ENCODE measurements at regions of chr6 and their contacts with region 1.

Region 1: GRCh38 chr6:2988426-2989331 is 11.0 kb upstream of the NQO2 start:
- DNase-seq: peak in 8 of 9 donors; percentile 68 to 84 (median 78)
- ATAC-seq: peak; percentile 87
- H3K4me3 ChIP-seq: peak overlapping the region; percentile 76
- H3K4me3 Mint-ChIP-seq: peak overlapping the region; percentile 88 to 98 (median 96)
- H3K27ac ChIP-seq: peak overlapping the region; percentile 94
- H3K27ac Mint-ChIP-seq: peak overlapping the region; percentile 94 to 100 (median 100)
- H3K4me1 ChIP-seq: peaks cover 14% of the 10 kb centered on the region in 2 donors
- H3K4me1 Mint-ChIP-seq: peaks cover 15 to 41% (median 30%) of the 10 kb centered on the region in 7 donors
- H3K27me3 ChIP-seq: no peaks in the 10 kb centered on the region
- H3K27me3 Mint-ChIP-seq: peaks cover 0 to 11% (median 0%) of the 10 kb centered on the region in 5 donors

Region 2: GRCh38 chr6:2684059-2684749 is 304.5 kb before region 1 on chr6:
- CTCF ChIA-PET with region 1: no interaction called
- POLR2A ChIA-PET with region 1: no interaction called
- intact Hi-C with region 1: no loop called
- DNase-seq: no peak
- ATAC-seq: no peak
- H3K4me3 ChIP-seq: no peak overlapping the region
- H3K4me3 Mint-ChIP-seq: no peak overlapping the region
- H3K27ac ChIP-seq: no peak overlapping the region
- H3K27ac Mint-ChIP-seq: no peak overlapping the region
- H3K4me1 ChIP-seq: no peaks in the 10 kb centered on the region
- H3K4me1 Mint-ChIP-seq: no peaks in the 10 kb centered on the region
- H3K27me3 ChIP-seq: no peaks in the 10 kb centered on the region
- H3K27me3 Mint-ChIP-seq: no peaks in the 10 kb centered on the region

Region 3: GRCh38 chr6:2744209-2744771 is 244.4 kb before region 1 on chr6:
- CTCF ChIA-PET with region 1: no interaction called
- POLR2A ChIA-PET with region 1: no interaction called
- intact Hi-C with region 1: no loop called
- DNase-seq: no peak
- ATAC-seq: no peak
- H3K4me3 ChIP-seq: no peak overlapping the region
- H3K4me3 Mint-ChIP-seq: no peak overlapping the region
- H3K27ac ChIP-seq: no peak overlapping the region
- H3K27ac Mint-ChIP-seq: no peak overlapping the region
- H3K4me1 ChIP-seq: no peaks in the 10 kb centered on the region
- H3K4me1 Mint-ChIP-seq: no peaks in the 10 kb centered on the region
- H3K27me3 ChIP-seq: no peaks in the 10 kb centered on the region
- H3K27me3 Mint-ChIP-seq: peaks cover 0 to 40% (median 0%) of the 10 kb centered on the region in 5 donors

Region 4: GRCh38 chr6:2791124-2791974 is 197.3 kb before region 1 on chr6:
- CTCF ChIA-PET with region 1: interaction called, 16 read pairs
- POLR2A ChIA-PET with region 1: interaction called, 8 read pairs
- intact Hi-C with region 1: loop called (anchors 1 kb)
- DNase-seq: peak in 8 of 9 donors; percentile 10 to 61 (median 53)
- ATAC-seq: peak; percentile 73
- H3K4me3 ChIP-seq: no peak overlapping the region
- H3K4me3 Mint-ChIP-seq: peak overlapping the region in 8 of 10 donors; percentile 12 to 71 (median 56)
- H3K27ac ChIP-seq: no peak overlapping the region
- H3K27ac Mint-ChIP-seq: peak overlapping the region; percentile 29 to 90 (median 81)
- H3K4me1 ChIP-seq: peaks cover 15 to 19% of the 10 kb centered on the region in 2 donors
- H3K4me1 Mint-ChIP-seq: peaks cover 29 to 44% (median 36%) of the 10 kb centered on the region in 7 donors
- H3K27me3 ChIP-seq: no peaks in the 10 kb centered on the region
- H3K27me3 Mint-ChIP-seq: no peaks in the 10 kb centered on the region

Region 5: GRCh38 chr6:2876210-2877056 is 112.2 kb before region 1 on chr6:
- CTCF ChIA-PET with region 1: interaction called, 3 read pairs
- POLR2A ChIA-PET with region 1: interaction called, 10 read pairs
- intact Hi-C with region 1: no loop called
- DNase-seq: no peak
- ATAC-seq: peak; percentile 38
- H3K4me3 ChIP-seq: peak overlapping the region; percentile 50
- H3K4me3 Mint-ChIP-seq: peak overlapping the region; percentile 79 to 87 (median 84)
- H3K27ac ChIP-seq: peak overlapping the region; percentile 71
- H3K27ac Mint-ChIP-seq: peak overlapping the region; percentile 82 to 98 (median 91)
- H3K4me1 ChIP-seq: peaks cover 54 to 55% of the 10 kb centered on the region in 2 donors
- H3K4me1 Mint-ChIP-seq: peaks cover 63 to 83% (median 79%) of the 10 kb centered on the region in 7 donors
- H3K27me3 ChIP-seq: no peaks in the 10 kb centered on the region
- H3K27me3 Mint-ChIP-seq: no peaks in the 10 kb centered on the region

Region 6: GRCh38 chr6:2952557-2953095 is 36.1 kb before region 1 on chr6:
- CTCF ChIA-PET with region 1: interaction called, 5 read pairs
- POLR2A ChIA-PET with region 1: interaction called, 7 read pairs
- intact Hi-C with region 1: loop called (anchors 1 to 2 kb)
- DNase-seq: peak in 4 of 9 donors; percentile 10 to 61 (median 54)
- ATAC-seq: peak; percentile 96
- H3K4me3 ChIP-seq: no peak overlapping the region
- H3K4me3 Mint-ChIP-seq: peak overlapping the region in 3 of 10 donors; percentile 53 to 65 (median 64)
- H3K27ac ChIP-seq: no peak overlapping the region
- H3K27ac Mint-ChIP-seq: peak overlapping the region in 4 of 9 donors; percentile 34 to 87 (median 68)
- H3K4me1 ChIP-seq: peaks cover 0 to 2% of the 10 kb centered on the region in 2 donors
- H3K4me1 Mint-ChIP-seq: peaks cover 10 to 31% (median 16%) of the 10 kb centered on the region in 7 donors
- H3K27me3 ChIP-seq: no peaks in the 10 kb centered on the region
- H3K27me3 Mint-ChIP-seq: peaks cover 0 to 12% (median 0%) of the 10 kb centered on the region in 5 donors

Region 7: DNA sequence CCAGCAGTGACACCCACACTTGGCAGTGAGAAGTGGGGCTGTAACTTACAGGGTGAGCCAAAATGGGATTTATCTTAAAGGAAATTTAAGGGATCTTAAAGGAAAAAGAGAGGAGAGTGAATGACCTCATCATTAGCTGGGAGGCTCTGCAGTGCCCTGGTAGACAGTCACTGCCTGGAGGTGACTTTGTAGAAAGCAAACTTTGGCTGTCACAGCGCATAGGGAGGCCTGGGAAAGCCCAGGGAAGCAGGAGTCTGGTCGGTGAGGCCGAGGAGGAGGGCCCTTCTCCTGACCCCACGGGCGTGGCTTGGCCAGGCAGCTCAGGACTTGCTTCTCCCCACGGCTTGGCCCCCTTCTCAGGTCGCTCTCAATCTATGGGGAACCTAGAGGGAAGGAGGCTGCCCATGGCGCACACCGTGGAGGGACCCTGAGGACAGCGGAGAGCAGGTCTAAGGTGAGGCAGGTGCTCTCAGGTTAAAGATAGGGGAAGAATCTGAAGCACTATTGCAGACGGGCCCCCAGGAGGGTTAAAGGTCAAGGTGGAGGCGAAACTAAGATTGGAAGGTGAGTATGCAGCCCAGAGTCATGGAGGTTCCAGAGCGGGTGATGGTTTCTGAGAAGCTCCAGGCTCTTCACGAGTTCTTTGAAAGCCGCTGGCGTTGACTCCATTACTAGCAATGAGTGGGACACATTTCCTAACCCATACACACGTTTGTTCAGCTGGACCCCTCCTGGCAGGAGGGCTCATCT is 64.0 kb after region 1 on chr6:
- CTCF ChIA-PET with region 1: interaction called, 12 read pairs
- POLR2A ChIA-PET with region 1: interaction called, 33 read pairs
- intact Hi-C with region 1: no loop called
- DNase-seq: no peak
- ATAC-seq: no peak
- H3K4me3 ChIP-seq: peak overlapping the region; percentile 64
- H3K4me3 Mint-ChIP-seq: peak overlapping the region; percentile 70 to 83 (median 76)
- H3K27ac ChIP-seq: no peak overlapping the region
- H3K27ac Mint-ChIP-seq: peak overlapping the region; percentile 52 to 84 (median 69)
- H3K4me1 ChIP-seq: peaks cover 5% of the 10 kb centered on the region in 2 donors
- H3K4me1 Mint-ChIP-seq: peaks cover 7 to 36% (median 17%) of the 10 kb centered on the region in 7 donors
- H3K27me3 ChIP-seq: no peaks in the 10 kb centered on the region
- H3K27me3 Mint-ChIP-seq: peaks cover 0 to 23% (median 0%) of the 10 kb centered on the region in 5 donors

Region 8: DNA sequence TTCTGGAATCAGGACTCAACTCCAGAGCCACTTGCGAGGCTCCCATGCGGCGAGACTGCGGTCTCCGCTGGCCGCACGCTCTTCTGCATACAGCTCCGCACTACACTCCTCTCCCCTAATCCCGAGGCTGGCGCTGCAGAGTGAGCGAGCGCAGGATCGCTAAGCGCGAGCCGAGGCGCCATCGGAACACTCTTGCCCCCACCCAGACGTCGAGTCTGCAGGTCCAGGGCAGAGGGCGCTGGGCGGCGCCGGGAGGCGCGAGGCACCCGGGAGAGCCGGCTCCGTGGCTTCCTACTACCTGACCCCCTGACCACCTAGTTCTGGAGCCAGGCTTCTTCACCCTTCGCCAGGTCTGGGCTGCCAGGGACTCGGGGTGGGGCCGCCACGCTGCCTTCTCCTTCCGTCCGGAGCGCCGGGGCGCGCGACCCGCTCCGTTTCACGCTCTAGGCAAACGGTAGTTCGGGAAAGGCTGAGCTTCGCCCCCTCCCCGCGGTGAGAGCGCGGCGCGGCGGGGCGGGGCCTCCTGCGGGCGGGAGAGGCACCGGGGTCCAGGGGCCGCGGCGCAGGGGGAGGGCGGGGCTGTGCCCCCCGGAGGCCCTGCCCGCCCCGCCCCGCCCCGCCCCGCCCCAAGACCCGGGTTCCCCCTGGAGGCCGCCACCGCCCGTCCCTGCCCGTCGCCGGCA is 174.0 kb after region 1 on chr6:
- CTCF ChIA-PET with region 1: no interaction called
- POLR2A ChIA-PET with region 1: interaction called, 7 read pairs
- intact Hi-C with region 1: loop called (anchors 1 to 2 kb)
- DNase-seq: peak; percentile 29 to 62 (median 51)
- ATAC-seq: peak; percentile 63
- H3K4me3 ChIP-seq: peak overlapping the region; percentile 73
- H3K4me3 Mint-ChIP-seq: peak overlapping the region; percentile 78 to 87 (median 84)
- H3K27ac ChIP-seq: peak overlapping the region; percentile 70
- H3K27ac Mint-ChIP-seq: peak overlapping the region in 8 of 9 donors; percentile 37 to 92 (median 64)
- H3K4me1 ChIP-seq: peaks cover 19 to 22% of the 10 kb centered on the region in 2 donors
- H3K4me1 Mint-ChIP-seq: peaks cover 0 to 40% (median 36%) of the 10 kb centered on the region in 7 donors
- H3K27me3 ChIP-seq: no peaks in the 10 kb centered on the region
- H3K27me3 Mint-ChIP-seq: peaks cover 0 to 68% (median 6%) of the 10 kb centered on the region in 5 donors

Region 9: DNA sequence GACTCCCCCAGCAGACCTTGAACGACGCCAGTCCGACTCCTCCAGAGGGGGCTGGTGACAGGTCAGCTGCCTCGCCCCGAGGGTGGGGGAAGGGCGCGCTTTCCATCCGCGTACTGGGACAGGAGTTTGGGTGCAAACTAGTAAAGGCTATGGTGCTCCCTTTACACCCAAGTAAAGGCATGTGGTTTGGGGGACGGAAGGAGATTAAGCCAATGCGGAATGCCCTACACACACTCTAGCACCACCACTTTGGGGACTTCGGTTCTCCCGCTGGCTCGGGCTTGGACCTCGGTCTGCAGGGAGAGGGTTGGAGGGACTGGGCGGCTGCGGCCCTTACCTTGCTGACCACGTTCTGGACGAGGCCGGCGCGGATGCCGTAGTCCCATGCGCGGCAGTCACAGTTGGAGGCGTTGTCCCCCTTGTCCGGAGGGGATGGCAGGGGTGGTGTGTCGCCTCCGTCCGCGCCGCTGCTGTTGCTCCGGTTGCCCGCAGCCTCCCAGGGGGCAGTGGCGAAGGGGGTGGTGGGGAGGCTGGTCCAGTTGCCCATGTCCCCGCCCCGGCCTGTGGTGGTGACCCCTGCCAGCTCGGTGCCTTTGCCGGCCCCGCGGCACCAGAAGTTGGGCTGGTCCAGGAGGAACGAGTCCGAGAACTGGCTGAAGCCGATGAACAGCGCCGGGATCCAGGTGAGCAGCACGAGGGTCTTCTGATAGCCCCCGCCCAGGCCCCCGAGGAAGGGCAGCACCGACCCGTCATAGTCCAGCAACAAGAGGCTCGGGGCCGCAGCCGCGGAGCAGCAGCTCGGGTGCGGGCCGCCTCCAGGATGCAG is 467.1 kb after region 1 on chr6:
- CTCF ChIA-PET with region 1: no interaction called
- POLR2A ChIA-PET with region 1: no interaction called
- intact Hi-C with region 1: no loop called
- DNase-seq: peak in 6 of 9 donors; percentile 15 to 35 (median 24)
- ATAC-seq: peak; percentile 5
- H3K4me3 ChIP-seq: peak overlapping the region; percentile 66
- H3K4me3 Mint-ChIP-seq: peak overlapping the region in 1 of 10 donors; percentile 63
- H3K27ac ChIP-seq: peak overlapping the region; percentile 61
- H3K27ac Mint-ChIP-seq: peak overlapping the region in 3 of 9 donors; percentile 37 to 44 (median 39)
- H3K4me1 ChIP-seq: peaks cover 8 to 24% of the 10 kb centered on the region in 2 donors
- H3K4me1 Mint-ChIP-seq: peaks cover 5 to 27% (median 19%) of the 10 kb centered on the region in 7 donors
- H3K27me3 ChIP-seq: peaks cover 0 to 4% of the 10 kb centered on the region in 2 donors
- H3K27me3 Mint-ChIP-seq: peaks cover 0 to 46% (median 8%) of the 10 kb centered on the region in 5 donors

Region 10: DNA sequence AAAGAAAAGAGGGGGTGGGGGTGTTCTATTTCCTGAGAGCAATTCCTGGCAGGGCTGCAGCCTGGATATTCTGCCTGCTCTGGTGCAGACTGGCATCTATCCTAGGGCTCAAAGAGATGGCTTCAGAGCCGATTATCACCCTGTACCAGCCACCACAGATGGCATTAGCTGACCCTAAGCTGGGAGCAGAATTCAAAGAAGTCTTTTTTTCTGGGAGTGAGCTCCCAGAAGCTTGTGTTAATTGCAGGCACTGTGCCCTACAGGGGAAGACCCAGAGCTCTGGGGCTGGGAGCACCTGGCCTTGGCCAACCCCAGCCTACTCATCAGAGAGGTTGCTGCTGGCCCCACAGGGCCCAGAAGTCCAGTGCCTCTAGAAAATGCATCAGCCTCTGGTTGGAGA is 676.9 kb after region 1 on chr6:
- CTCF ChIA-PET with region 1: no interaction called
- POLR2A ChIA-PET with region 1: no interaction called
- intact Hi-C with region 1: no loop called
- DNase-seq: no peak
- ATAC-seq: no peak
- H3K4me3 ChIP-seq: no peak overlapping the region
- H3K4me3 Mint-ChIP-seq: no peak overlapping the region
- H3K27ac ChIP-seq: no peak overlapping the region
- H3K27ac Mint-ChIP-seq: no peak overlapping the region
- H3K4me1 ChIP-seq: no peaks in the 10 kb centered on the region
- H3K4me1 Mint-ChIP-seq: no peaks in the 10 kb centered on the region
- H3K27me3 ChIP-seq: no peaks in the 10 kb centered on the region
- H3K27me3 Mint-ChIP-seq: peaks cover 0 to 7% (median 0%) of the 10 kb centered on the region in 5 donors

Measured in naive thymus-derived CD4-positive, alpha-beta T cell (primary cell).